Esophagus squamous epithelium (tissue), 5 donors: ENCODE measurements at regions of chr12 and their contacts with region 1.

Region 1: GRCh38 chr12:48750769-48751735 is 34.5 kb upstream of the CCNT1 start:
- DNase-seq: no peak
- H3K4me3 ChIP-seq: no peak overlapping the region
- H3K27ac ChIP-seq: no peak overlapping the region
- H3K4me1 ChIP-seq: peaks cover 0 to 5% (median 0%) of the 10 kb centered on the region in 3 donors
- H3K27me3 ChIP-seq: no peaks in the 10 kb centered on the region
- CTCF ChIP-seq: no peak
- POLR2A ChIP-seq: no peak

Region 2: DNA sequence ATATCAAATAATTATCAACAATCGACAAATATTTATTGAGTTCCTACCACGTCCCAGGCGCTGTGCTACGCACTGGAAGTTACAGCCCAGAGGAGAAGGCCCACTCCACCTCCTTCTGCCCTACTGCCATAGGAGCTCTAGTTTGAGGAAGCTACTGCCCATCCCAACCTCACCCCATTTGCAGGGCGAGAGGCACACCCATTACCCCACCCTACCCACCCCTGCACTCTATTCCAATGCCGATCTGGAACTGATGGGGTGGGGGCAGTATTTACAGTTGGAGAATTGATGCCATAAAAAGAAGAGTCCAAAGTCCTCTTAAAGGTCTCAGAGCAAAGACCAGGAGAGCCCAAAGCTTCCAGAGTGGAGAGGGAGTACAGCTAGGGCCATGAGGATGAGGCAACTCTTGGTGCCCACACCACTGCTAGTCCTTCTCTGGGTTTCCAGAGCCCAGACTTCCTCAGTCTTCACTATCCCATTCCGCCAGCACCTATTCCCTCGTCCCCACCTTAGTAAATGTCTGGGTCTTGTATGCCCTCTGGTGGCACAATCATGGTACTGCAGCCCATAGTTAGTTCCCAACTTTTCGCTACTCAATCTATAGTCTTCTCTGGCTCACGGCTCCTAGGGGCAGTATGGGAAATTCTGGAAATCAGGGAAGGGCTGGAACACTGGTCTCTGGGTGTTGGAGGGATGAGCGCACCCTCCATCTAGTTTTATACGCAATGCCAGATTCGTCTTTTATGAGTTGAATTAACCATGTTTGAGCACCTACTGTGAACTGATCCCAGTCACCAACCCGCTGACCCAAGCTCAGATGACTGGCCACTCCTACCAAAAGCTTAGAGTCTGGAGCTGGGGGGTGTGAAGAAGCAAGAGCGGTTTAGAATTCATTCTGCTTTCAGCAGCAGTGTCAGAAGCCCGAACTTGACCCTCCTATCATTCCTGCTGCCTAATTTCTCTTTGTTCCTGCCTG is 44.7 kb after region 1 on chr12:
- intact Hi-C with region 1: loop called (anchors 5 kb)
- DNase-seq: no peak
- H3K4me3 ChIP-seq: no peak overlapping the region
- H3K27ac ChIP-seq: peak overlapping the region; percentile 42 to 67 (median 55)
- H3K4me1 ChIP-seq: peaks cover 6 to 20% (median 7%) of the 10 kb centered on the region in 3 donors
- H3K27me3 ChIP-seq: peaks cover 0 to 17% (median 0%) of the 10 kb centered on the region in 4 donors
- CTCF ChIP-seq: peak; percentile 87 to 99 (median 98)
- POLR2A ChIP-seq: no peak

Region 3: DNA sequence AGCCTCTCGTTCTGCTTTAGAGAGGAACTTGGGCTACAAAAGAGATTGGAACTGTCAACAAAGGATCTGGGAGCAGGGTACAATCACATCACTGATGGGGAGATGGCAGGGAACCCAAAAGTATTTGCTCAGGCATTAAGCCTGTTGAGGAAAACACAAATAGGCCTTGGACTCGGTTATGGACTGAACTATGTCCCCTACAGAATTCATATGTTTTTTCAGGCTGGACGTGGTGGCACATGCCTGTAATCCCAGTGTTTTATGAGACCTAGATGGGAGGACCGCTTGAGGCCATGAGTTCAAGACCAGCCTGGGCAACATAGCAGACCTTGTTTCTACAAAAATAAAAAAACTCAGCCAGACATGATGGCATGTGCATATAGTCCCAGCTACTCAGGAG is 87.0 kb after region 1 on chr12:
- intact Hi-C with region 1: no loop called
- DNase-seq: no peak
- H3K4me3 ChIP-seq: no peak overlapping the region
- H3K27ac ChIP-seq: no peak overlapping the region
- H3K4me1 ChIP-seq: no peaks in the 10 kb centered on the region
- H3K27me3 ChIP-seq: no peaks in the 10 kb centered on the region
- CTCF ChIP-seq: no peak
- POLR2A ChIP-seq: no peak

Region 4: DNA sequence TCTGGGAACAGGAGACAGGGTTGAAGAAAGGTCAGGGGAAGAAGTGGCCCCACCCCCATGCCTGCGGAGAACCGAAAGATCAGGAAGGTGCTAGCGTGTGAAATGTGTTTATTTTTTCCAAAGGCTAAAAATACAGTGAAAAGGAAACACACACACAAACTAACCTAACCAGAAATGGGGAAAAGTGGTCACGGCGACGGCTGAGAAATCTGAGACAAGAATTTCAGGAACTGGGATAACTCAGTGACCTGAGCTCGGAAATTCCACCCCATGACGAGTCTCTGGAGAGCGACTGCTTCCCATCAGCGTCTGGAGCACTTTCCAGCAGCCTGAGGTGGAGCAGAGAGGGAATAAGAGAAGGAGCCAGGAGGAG is 131.2 kb after region 1 on chr12:
- intact Hi-C with region 1: no loop called
- DNase-seq: no peak
- H3K4me3 ChIP-seq: peak overlapping the region in 2 of 4 donors; percentile 5 to 29
- H3K27ac ChIP-seq: peak overlapping the region in 3 of 4 donors; percentile 7 to 59 (median 36)
- H3K4me1 ChIP-seq: peaks cover 0 to 24% (median 3%) of the 10 kb centered on the region in 3 donors
- H3K27me3 ChIP-seq: peaks cover 0 to 45% (median 0%) of the 10 kb centered on the region in 4 donors
- CTCF ChIP-seq: no peak
- POLR2A ChIP-seq: no peak